Activated T-helper 1 cell treated with anti-CD3 and anti-CD28 coated beads, Interleukin-12 subunit alpha, Interleukin-12 subunit beta, Interleukin-2, Interleukin-4 antibody, amounts not matched to agents 30 ng/mL and 10 ng/mL and 1 ng/mL, durations not matched to agents 14 hours and 24 hours and 36 hours (primary cell): ENCODE measurements at regions of chr4 and their contacts with region 1.

Region 1: DNA sequence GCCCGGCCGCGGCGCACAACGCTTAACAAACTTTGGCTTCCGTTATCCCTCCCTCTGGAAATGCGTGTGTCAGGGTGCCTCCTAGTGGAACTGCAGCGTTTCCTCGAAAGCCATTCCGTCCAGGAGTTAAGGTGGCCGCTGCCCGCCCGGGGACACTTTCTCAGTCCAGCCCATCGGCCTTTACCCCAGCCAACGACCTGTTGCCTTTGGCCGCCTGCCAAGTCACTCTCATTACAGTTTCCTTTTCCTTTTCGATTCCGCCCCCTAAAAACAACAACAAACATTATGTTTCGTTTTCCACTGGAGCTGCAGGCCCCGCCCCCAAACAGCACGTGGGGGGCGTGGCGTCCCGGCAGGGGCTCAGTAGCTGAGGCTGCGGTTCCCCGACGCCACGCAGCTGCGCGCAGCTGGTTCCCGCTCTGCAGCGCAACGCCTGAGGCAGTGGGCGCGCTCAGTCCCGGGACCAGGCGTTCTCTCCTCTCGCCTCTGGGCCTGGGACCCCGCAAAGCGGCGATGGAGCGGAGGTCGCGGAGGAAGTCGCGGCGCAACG is at the start of gene HERC5:
- DNase-seq: peak; percentile 92
- H3K4me3 Mint-ChIP-seq: peak within 1 kb of the TSS; percentile 99
- H3K27ac Mint-ChIP-seq: peak within 1 kb of the TSS; percentile 100
- H3K4me1 Mint-ChIP-seq: peaks cover 47% of the 10 kb centered on the region
- H3K27me3 Mint-ChIP-seq: no peaks in the 10 kb centered on the region
- total RNA-seq, gene HERC5: 19.1 and 21.2 TPM in 2 replicates

Region 2: DNA sequence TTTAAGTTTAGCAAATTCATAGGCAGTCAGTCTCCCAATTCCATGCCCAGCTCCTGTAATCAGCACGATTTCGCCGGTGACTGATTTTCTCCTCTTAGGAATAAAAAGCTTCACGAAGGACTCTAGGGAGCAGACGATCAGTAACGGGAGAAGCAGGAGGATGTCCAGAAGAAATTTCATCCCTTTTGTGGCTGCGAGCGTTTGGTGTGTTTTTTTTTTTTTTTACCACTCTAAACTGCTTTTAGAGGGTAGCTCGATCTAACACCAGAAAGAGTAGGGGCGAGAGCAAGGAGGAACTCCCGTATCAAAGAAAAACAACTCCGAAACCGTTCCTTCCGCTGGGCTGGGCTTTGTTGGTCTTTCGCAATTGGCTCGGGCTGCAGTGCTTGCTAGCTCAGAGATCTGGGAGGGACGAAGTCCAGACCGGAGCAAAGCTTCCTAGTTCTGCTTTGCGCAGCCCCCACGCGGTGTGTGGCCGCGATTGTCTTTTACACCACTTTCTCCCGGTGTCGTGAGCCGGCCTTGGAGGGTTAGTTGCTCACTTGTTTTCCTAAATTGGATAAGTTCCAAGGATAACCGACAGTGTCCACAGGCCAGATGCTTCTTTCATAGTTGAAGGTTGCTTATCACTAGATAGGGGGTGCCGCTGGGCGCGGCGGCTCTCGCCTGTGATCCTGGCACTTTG is 1065.8 kb before region 1 on chr4 and contains the start of gene HSD17B11:
- intact Hi-C with region 1: loop called (anchors 5 kb)
- DNase-seq: peak; percentile 74
- H3K4me3 Mint-ChIP-seq: peak within 1 kb of the TSS; percentile 94
- H3K27ac Mint-ChIP-seq: peak within 1 kb of the TSS; percentile 85
- H3K4me1 Mint-ChIP-seq: peaks cover 44% of the 10 kb centered on the region
- H3K27me3 Mint-ChIP-seq: peaks cover 8% of the 10 kb centered on the region
- total RNA-seq, gene HSD17B11: 12.1 and 12.7 TPM in 2 replicates

Region 3: DNA sequence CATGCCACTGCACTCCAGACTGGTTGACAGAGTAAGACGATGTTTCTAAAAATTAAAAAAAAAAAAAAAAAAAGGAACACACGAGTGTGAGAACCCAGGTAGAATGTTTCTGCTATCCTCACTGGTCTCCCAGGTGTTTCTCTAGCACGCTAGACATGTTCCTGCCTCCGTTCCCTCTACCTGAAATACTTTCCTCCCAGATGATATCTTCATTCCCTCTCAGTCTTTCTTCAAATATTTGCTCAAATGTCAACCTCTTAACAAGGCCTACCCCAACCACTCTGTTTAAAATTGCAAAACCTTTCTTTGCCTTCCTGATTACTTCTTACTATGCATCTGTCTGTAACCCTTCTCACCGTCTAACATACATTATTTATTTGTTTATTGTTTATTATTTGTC is 238.9 kb before region 1 on chr4:
- intact Hi-C with region 1: loop called (anchors 2 kb)
- DNase-seq: no peak
- H3K4me3 Mint-ChIP-seq: no peak overlapping the region
- H3K27ac Mint-ChIP-seq: no peak overlapping the region
- H3K4me1 Mint-ChIP-seq: peaks cover 5% of the 10 kb centered on the region
- H3K27me3 Mint-ChIP-seq: peaks cover 5% of the 10 kb centered on the region

Region 4: DNA sequence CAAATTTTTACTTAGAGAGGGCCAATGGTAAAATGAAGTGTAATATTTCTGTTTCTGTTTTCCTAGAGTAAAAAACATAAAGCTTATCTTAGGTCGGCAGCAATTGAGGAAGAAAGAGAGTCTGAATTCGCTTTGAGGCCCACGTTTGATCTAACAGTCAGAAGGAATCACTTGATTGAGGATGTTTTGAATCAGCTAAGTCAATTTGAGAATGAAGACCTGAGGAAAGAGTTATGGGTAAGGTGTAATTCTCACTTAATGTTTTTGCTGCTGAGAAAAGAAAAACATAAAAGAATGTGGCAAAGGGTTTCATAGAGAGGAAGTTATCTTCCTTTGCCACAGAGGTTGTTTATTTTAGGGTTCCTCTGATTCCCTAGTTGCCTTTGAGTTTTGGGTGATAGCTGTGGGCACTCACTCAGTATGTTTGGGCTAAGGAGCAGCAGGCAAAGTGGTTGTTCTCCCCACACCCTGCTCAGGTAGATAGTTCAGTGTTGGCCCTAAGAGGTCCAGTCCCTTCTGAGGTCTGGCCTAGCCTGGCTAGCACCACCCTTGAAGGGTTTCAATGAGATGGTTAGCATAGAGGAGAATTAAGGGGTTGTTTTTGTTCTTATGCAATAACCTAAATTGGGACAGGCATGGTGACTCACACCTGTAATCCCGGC is 32.4 kb after region 1 on chr4:
- intact Hi-C with region 1: loop called (anchors 1 kb)
- DNase-seq: no peak
- H3K4me3 Mint-ChIP-seq: no peak overlapping the region
- H3K27ac Mint-ChIP-seq: peak overlapping the region; percentile 68
- H3K4me1 Mint-ChIP-seq: peaks cover 18% of the 10 kb centered on the region
- H3K27me3 Mint-ChIP-seq: no peaks in the 10 kb centered on the region

Region 5: GRCh38 chr4:88591787-88592599 is 135.2 kb after region 1 on chr4 and contains the start of gene HERC3:
- intact Hi-C with region 1: loop called (anchors 1 kb)
- DNase-seq: peak; percentile 88
- H3K4me3 Mint-ChIP-seq: peak within 1 kb of the TSS; percentile 91
- H3K27ac Mint-ChIP-seq: peak within 1 kb of the TSS; percentile 88
- H3K4me1 Mint-ChIP-seq: peaks cover 35% of the 10 kb centered on the region
- H3K27me3 Mint-ChIP-seq: peaks cover 28% of the 10 kb centered on the region
- total RNA-seq, gene HERC3: 12.8 and 14.2 TPM in 2 replicates

Region 6: GRCh38 chr4:88823058-88823919 is 366.5 kb after region 1 on chr4:
- intact Hi-C with region 1: loop called (anchors 1 kb)
- DNase-seq: peak; percentile 76
- H3K4me3 Mint-ChIP-seq: peak overlapping the region; percentile 95
- H3K27ac Mint-ChIP-seq: peak overlapping the region; percentile 99
- H3K4me1 Mint-ChIP-seq: peaks cover 48% of the 10 kb centered on the region
- H3K27me3 Mint-ChIP-seq: no peaks in the 10 kb centered on the region